Transverse colon (tissue), 4 donors: ENCODE measurements at regions of chr19 and their contacts with region 1.

Region 1: DNA sequence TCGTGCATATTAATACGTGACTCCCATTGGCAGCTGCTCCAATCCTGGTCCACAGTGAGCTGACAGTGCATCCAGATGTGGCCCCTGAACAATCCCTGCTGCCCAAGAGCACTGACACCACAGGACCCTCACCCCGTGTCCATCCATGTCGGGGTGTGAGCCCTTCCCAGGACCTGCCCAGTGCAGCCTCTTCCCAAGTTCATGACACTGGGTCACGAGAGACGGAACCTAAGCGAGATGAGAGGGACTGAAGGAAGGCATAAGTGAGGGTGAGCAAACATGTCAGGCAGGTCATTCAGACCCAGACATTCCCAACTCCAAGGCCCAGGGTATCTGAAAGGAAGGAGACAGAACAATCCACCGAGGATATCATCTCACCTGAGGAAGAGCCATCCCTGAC is 3.5 kb downstream of the ZNF468 start:
- DNase-seq: no peak
- H3K4me3 ChIP-seq: no peak overlapping the region
- H3K27ac ChIP-seq: no peak overlapping the region
- H3K4me1 ChIP-seq: peaks cover 0 to 14% (median 3%) of the 10 kb centered on the region in 4 donors
- H3K27me3 ChIP-seq: no peaks in the 10 kb centered on the region
- CTCF ChIP-seq: no peak
- EP300 ChIP-seq: no peak
- POLR2A ChIP-seq: no peak

Region 2: DNA sequence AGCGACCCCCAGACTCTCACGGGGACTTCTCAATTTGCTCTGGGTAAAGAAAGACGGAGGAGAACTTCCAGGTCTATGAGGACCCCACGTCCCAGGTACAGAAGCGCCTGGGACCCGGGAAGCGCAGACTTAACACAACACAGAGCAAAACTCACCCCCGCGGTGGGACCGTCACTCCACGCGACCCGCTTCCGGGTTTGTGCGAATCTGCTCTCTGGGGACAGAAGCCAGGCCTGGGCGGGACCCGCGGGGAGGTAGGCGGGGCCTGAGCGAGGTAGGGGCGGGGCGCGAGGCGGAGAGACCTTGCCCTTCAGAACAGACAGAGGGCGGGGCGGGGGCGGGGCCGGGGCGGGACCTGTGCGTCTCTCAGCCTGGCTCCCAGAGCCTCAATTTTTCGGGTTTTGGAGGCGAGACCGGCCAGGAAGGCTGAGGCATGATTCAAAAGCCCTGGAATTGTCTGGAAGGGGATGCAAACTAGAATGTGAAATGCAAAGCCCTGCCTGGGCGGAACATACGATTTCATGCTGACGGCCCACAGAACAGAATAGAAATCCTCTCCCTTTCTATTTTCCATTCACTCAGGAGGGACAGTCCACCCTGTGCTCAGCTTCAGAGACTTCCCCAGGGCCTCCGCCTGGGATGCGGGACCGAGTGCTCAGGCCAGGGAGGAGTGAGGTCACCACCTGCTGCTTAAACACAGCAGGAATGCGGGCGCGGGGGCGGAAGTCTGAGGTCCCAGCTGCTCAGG is 88.7 kb after region 1 on chr19:
- in situ Hi-C with region 1: loop called in 1 of 4 experiments (anchors 5 kb)
- intact Hi-C with region 1: no loop called
- DNase-seq: peak; percentile 98
- H3K4me3 ChIP-seq: peak overlapping the region; percentile 59 to 98 (median 84)
- H3K27ac ChIP-seq: peak overlapping the region; percentile 88 to 97 (median 94)
- H3K4me1 ChIP-seq: peaks cover 11 to 50% (median 23%) of the 10 kb centered on the region in 4 donors
- H3K27me3 ChIP-seq: no peaks in the 10 kb centered on the region
- CTCF ChIP-seq: no peak
- EP300 ChIP-seq: no peak
- POLR2A ChIP-seq: peak; percentile 95

Region 3: DNA sequence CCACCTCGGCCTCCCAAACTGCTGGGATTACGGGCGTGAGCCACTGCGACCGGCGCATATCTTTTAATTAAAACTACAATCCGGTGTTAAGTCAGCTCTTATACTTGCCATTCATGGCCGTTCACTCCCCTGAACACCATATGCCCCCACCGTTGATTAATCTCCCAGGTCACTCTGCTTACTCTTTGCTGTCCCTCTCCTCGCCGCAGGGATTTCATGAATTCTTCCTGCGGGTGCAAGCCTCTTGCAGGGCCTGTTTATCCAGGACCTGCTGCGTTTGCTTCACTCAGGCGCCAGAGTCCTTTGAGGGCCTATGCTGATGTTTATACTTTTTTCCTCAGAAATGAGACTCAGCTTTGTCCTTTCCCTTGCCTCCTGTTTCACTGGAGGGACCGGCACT is 191.7 kb after region 1 on chr19:
- in situ Hi-C with region 1: no loop called
- intact Hi-C with region 1: no loop called
- DNase-seq: no peak
- H3K4me3 ChIP-seq: no peak overlapping the region
- H3K27ac ChIP-seq: no peak overlapping the region
- H3K4me1 ChIP-seq: no peaks in the 10 kb centered on the region
- H3K27me3 ChIP-seq: peaks cover 3% of the 10 kb centered on the region
- CTCF ChIP-seq: no peak
- EP300 ChIP-seq: no peak
- POLR2A ChIP-seq: no peak